Activated B cell treated with CpG ODN at 0.5 μM for 24 hours (primary cell): ENCODE measurements at regions of chr6 and their contacts with region 1.

Region 1: GRCh38 chr6:35522660-35523658 is 10.3 kb upstream of the TULP1 start:
- DNase-seq: peak; percentile 54
- ATAC-seq: peak; percentile 96
- H3K4me3 Mint-ChIP-seq: peak overlapping the region; percentile 69
- H3K27ac Mint-ChIP-seq: no peak overlapping the region
- H3K4me1 Mint-ChIP-seq: peaks cover 8% of the 10 kb centered on the region
- H3K27me3 Mint-ChIP-seq: peaks cover 3% of the 10 kb centered on the region
- CTCF ChIP-seq: peak; percentile 98

Region 2: DNA sequence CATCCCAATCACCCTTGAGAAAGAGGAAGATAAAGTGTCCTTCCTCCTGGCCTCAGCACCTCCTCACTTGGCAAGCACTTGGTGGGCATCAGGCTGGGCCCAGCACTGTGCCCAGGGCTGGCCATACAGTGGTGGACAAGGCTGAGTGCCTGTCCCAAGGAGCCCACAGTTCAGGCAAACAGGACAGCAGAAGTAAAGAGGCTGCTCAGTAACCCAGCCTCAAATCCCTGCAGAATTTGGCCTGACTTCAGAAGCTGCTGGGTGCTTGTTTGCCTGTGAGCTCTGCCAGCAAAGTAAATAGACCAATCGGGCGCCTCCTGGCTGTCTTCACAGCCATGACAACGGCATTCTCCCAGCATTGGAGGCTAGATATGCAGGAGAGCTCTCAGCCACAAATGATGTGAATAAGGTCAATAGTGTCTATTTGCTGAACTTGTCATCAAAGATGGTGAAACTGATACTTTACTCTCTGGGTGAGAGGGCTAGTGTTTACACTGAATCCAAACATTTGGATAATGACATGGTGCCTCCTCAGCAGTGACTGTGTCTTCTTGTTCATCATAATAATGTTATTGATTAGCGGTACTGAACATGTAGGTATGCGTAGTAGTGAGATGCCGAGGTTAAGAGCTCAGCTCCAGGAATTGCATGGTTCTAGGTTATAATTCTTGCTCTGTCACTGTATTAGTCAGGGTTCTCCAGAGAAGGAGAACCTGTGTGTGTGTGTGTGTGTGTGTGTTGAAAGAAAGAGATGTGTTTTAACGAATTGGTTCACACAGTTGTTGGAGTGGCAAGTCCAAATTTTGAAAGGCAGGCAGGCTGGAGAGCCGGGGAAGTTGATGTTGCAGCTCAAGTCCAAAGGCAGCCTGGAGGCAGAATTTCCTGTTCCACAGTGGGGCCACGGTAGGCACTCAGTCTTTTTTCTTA is 107.6 kb before region 1 on chr6:
- CTCF ChIA-PET with region 1: no interaction called
- POLR2A ChIA-PET with region 1: no interaction called
- intact Hi-C with region 1: no loop called
- DNase-seq: no peak
- ATAC-seq: no peak
- H3K4me3 Mint-ChIP-seq: no peak overlapping the region
- H3K27ac Mint-ChIP-seq: no peak overlapping the region
- H3K4me1 Mint-ChIP-seq: peaks cover 26% of the 10 kb centered on the region
- H3K27me3 Mint-ChIP-seq: no peaks in the 10 kb centered on the region
- CTCF ChIP-seq: no peak

Region 3: DNA sequence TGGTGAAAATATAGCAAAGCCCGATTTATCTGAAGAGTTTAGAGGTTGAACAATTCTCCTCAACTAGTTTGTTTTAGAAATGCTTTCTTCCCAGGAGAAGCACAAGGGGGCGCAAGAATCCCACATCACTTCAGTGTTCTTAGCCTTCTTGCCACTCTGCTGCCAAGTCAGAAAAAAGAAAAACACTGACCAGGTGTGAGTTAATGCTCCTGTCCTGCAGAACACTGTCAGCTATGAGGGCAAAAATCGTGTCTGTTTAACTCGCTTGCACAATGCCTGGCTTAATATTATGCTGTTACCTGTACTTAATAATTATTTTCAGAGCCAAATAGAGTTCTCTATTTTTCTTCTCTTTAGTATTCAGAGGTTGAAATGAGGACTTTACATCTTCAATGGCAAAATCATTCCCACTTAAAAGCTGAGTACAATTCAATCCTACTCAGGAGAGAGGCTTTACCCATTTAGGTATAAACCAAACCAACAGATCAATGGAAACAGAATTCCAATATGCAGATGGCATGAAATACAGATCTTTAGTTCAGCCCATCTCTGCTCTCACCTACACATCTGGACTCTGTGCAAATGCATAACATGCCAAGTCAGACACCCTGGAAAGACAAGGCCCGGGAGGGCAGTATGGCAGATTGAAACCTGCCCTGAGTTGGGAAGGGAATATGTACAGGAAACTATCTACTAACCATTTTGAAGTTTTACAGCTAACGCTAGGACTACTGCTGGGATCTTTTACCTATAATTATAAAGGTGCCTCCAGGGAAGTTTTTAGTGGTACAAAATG is 61.1 kb after region 1 on chr6:
- CTCF ChIA-PET with region 1: interaction called, 4 read pairs
- POLR2A ChIA-PET with region 1: no interaction called
- intact Hi-C with region 1: loop called (anchors 1 kb)
- DNase-seq: peak; percentile 31
- ATAC-seq: peak; percentile 68
- H3K4me3 Mint-ChIP-seq: no peak overlapping the region
- H3K27ac Mint-ChIP-seq: no peak overlapping the region
- H3K4me1 Mint-ChIP-seq: peaks cover 10% of the 10 kb centered on the region
- H3K27me3 Mint-ChIP-seq: no peaks in the 10 kb centered on the region
- CTCF ChIP-seq: peak; percentile 70

Region 4: GRCh38 chr6:35737413-35738211 is 214.7 kb after region 1 on chr6:
- CTCF ChIA-PET with region 1: interaction called, 66 read pairs
- POLR2A ChIA-PET with region 1: no interaction called
- intact Hi-C with region 1: loop called (anchors 1 kb)
- DNase-seq: no peak
- ATAC-seq: peak; percentile 75
- H3K4me3 Mint-ChIP-seq: no peak overlapping the region
- H3K27ac Mint-ChIP-seq: peak overlapping the region; percentile 63
- H3K4me1 Mint-ChIP-seq: peaks cover 24% of the 10 kb centered on the region
- H3K27me3 Mint-ChIP-seq: no peaks in the 10 kb centered on the region
- CTCF ChIP-seq: peak; percentile 43